ENCODE measurements at regions of chr5 and their contacts with region 1.

Region 1: GRCh38 chr5:66066826-66067225 is 77.3 kb upstream of the SREK1 start:
- DNase-seq: no peak
- ATAC-seq: no peak
- H3K4me3 ChIP-seq: no peak overlapping the region
- H3K4me3 Mint-ChIP-seq: no peak overlapping the region
- H3K27ac ChIP-seq: no peak overlapping the region
- H3K27ac Mint-ChIP-seq: peak overlapping the region in 2 of 9 donors; percentile 12 to 56
- H3K4me1 ChIP-seq: peaks cover 0 to 5% of the 10 kb centered on the region in 2 donors
- H3K4me1 Mint-ChIP-seq: peaks cover 2 to 58% (median 38%) of the 10 kb centered on the region in 7 donors
- H3K27me3 ChIP-seq: no peaks in the 10 kb centered on the region
- H3K27me3 Mint-ChIP-seq: no peaks in the 10 kb centered on the region

Region 2: DNA sequence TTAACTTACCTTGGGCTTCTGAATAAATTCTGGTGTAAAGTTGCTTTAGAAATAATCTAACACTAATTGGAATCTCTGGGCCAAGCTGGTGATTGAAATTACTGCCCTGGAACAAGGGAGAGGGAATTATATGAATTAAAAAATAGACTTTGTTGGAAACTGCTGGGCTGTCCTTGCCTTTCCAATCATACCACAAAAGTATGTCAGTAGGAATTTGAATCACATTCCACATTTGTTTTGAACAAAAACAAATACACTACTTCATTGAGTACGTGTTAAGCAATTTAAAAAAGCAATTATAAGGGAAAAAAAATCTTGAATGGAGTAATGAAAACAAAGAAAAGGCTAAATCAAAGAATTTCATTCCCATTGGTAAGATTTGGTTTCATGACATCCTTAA is 25.2 kb before region 1 on chr5:
- CTCF ChIA-PET with region 1: no interaction called
- POLR2A ChIA-PET with region 1: no interaction called
- intact Hi-C with region 1: loop called in 1 of 2 experiments (anchors 2 kb)
- DNase-seq: no peak
- ATAC-seq: no peak
- H3K4me3 ChIP-seq: no peak overlapping the region
- H3K4me3 Mint-ChIP-seq: no peak overlapping the region
- H3K27ac ChIP-seq: no peak overlapping the region
- H3K27ac Mint-ChIP-seq: peak overlapping the region in 3 of 9 donors; percentile 44 to 59 (median 57)
- H3K4me1 ChIP-seq: no peaks in the 10 kb centered on the region
- H3K4me1 Mint-ChIP-seq: peaks cover 0 to 35% (median 29%) of the 10 kb centered on the region in 7 donors
- H3K27me3 ChIP-seq: no peaks in the 10 kb centered on the region
- H3K27me3 Mint-ChIP-seq: no peaks in the 10 kb centered on the region